Psoas muscle (tissue), 8 donors: ENCODE measurements at regions of chr11 and their contacts with region 1.

Region 1: DNA sequence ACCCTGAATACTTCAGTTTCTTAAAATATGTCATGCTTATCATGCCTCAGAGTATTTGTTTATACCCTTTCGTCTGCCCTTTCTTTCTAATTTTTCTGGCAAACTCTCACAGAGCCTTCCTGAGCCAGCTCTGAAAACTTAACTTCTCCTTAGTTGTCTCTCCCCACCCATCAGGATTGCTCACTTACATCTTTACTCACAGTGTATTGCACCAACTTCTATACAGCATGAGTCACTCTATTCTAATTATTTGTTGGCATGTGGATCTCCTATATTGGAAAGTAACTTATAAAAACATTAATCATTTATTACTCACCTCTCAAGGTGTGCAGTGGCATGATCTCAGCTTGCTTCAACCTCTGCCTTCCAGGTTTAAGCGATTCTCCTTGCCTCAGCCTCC is 114.9 kb downstream of the FANCF start:
- DNase-seq: no peak
- ATAC-seq: no peak
- H3K4me3 ChIP-seq: no peak overlapping the region
- H3K27ac ChIP-seq: no peak overlapping the region
- H3K4me1 ChIP-seq: no peaks in the 10 kb centered on the region
- H3K27me3 ChIP-seq: no peaks in the 10 kb centered on the region
- CTCF ChIP-seq: no peak

Region 2: DNA sequence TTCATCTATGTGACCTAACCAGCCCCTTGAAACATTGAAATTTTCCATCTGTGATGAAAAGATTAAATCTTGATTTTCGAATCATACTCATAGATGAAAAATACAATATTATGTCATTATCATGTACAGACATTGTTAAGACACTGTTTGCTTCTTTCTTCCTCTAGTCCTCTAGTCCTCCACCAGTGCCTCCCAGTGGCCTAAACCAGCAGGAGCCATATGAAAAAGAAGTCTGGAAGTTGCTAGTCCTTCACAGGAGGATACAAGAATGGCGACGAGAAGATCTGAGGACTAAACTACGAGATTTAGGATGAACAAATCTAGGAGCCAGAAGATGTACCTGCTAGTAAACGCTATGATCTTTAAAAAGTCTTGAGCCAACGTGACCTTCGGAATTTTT is 38.4 kb before region 1 on chr11:
- intact Hi-C with region 1: loop called in 1 of 2 experiments (anchors 5 kb)
- DNase-seq: no peak
- ATAC-seq: no peak
- H3K4me3 ChIP-seq: no peak overlapping the region
- H3K27ac ChIP-seq: no peak overlapping the region
- H3K4me1 ChIP-seq: no peaks in the 10 kb centered on the region
- H3K27me3 ChIP-seq: no peaks in the 10 kb centered on the region
- CTCF ChIP-seq: peak; percentile 7